Activated CD4-positive, alpha-beta T cell treated with anti-CD3 and anti-CD28 coated beads for 36 hours (primary cell): ENCODE measurements at regions of chr16 and their contacts with region 1.

Region 1: GRCh38 chr16:15592324-15592723 is 50.6 kb downstream of the MARF1 start:
- DNase-seq: peak; percentile 27
- ATAC-seq: no peak
- H3K4me3 Mint-ChIP-seq: no peak overlapping the region
- H3K27ac Mint-ChIP-seq: no peak overlapping the region
- H3K4me1 Mint-ChIP-seq: peaks cover 42% of the 10 kb centered on the region
- H3K27me3 Mint-ChIP-seq: no peaks in the 10 kb centered on the region

Region 2: GRCh38 chr16:15434425-15435215 is 157.7 kb before region 1 on chr16 and contains the start of gene BMERB1:
- CTCF ChIA-PET with region 1: no interaction called
- POLR2A ChIA-PET with region 1: no interaction called
- intact Hi-C with region 1: loop called in 1 of 2 experiments (anchors 2 kb)
- DNase-seq: peak; percentile 79
- ATAC-seq: peak; percentile 92
- H3K4me3 Mint-ChIP-seq: peak within 1 kb of the TSS; percentile 82
- H3K27ac Mint-ChIP-seq: no peak within 1 kb of the TSS
- H3K4me1 Mint-ChIP-seq: peaks cover 11% of the 10 kb centered on the region
- H3K27me3 Mint-ChIP-seq: peaks cover 20% of the 10 kb centered on the region
- total RNA-seq, gene BMERB1: 10.1 to 11.6 TPM

Region 3: GRCh38 chr16:15489016-15489415 is 103.3 kb before region 1 on chr16:
- CTCF ChIA-PET with region 1: no interaction called
- POLR2A ChIA-PET with region 1: interaction called, 7 read pairs
- intact Hi-C with region 1: loop called in 1 of 2 experiments (anchors 1 kb)
- DNase-seq: no peak
- ATAC-seq: peak; percentile 32
- H3K4me3 Mint-ChIP-seq: no peak overlapping the region
- H3K27ac Mint-ChIP-seq: peak overlapping the region; percentile 86
- H3K4me1 Mint-ChIP-seq: peaks cover 34% of the 10 kb centered on the region
- H3K27me3 Mint-ChIP-seq: no peaks in the 10 kb centered on the region

Region 4: DNA sequence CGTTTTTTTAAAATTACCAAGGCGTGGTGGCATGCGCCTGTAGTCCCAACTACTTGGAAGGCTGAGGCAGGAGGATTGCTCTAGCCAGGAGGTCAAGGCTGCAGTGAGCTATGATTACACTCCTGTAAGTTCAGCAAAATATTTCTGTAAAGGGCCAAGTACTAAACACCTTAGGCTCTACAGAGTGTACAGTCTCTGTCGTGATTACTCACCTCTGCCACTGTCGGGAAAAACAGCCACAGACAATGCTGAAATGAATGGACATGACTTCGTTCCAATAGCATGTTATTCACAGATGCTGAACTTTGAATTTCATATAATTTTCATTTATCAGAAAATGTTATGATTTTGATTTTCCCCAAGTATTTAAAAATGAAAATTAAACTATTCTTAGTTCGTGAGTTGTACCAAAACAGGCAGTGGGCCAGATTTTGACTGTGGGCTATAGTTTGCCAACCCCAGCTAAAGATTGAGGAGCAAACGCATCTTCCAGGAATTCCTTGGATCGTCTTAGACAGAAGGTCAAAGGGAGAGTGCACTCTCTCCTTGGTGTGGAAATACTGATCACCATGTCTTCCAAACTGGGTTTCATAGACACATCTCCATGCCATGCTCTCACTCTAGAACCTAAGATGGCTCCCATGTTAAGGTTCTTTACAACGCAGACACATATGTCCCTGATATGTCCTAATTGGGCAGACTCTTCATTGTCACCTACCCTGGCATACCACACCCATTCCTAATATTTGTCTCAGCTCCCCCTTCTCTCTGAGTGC is 38.8 kb before region 1 on chr16:
- CTCF ChIA-PET with region 1: no interaction called
- POLR2A ChIA-PET with region 1: interaction called, 5 read pairs
- intact Hi-C with region 1: loop called (anchors 1 kb)
- DNase-seq: peak; percentile 72
- ATAC-seq: peak; percentile 81
- H3K4me3 Mint-ChIP-seq: no peak overlapping the region
- H3K27ac Mint-ChIP-seq: peak overlapping the region; percentile 5
- H3K4me1 Mint-ChIP-seq: peaks cover 28% of the 10 kb centered on the region
- H3K27me3 Mint-ChIP-seq: no peaks in the 10 kb centered on the region

Region 5: DNA sequence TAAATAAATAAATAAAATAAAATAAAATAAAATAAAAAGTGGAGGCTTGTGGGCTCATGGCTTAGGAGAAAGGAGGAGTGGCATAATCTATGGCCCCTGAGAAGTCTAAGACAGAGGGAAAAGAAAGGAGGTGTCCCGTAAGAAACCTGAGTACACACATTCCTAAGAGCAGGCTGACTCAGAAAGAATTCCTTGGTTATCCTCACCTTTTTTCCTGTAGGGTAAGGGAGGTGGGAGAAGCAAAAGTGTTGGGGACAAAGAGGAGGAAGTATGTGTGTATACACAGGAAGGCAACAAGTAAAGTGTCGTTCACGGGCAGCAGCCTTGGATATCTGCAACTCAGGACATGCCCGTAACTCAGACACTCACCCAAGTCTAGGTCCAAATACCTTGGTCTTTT is 21.4 kb after region 1 on chr16:
- CTCF ChIA-PET with region 1: no interaction called
- POLR2A ChIA-PET with region 1: no interaction called
- intact Hi-C with region 1: no loop called
- DNase-seq: no peak
- ATAC-seq: no peak
- H3K4me3 Mint-ChIP-seq: no peak overlapping the region
- H3K27ac Mint-ChIP-seq: peak overlapping the region; percentile 47
- H3K4me1 Mint-ChIP-seq: peaks cover 12% of the 10 kb centered on the region
- H3K27me3 Mint-ChIP-seq: no peaks in the 10 kb centered on the region

Region 6: GRCh38 chr16:15650019-15650697 is 57.8 kb after region 1 on chr16 and contains the start of gene NDE1:
- CTCF ChIA-PET with region 1: no interaction called
- POLR2A ChIA-PET with region 1: no interaction called
- intact Hi-C with region 1: loop called in 1 of 2 experiments (anchors 2 kb)
- DNase-seq: peak; percentile 94
- ATAC-seq: peak; percentile 92
- H3K4me3 Mint-ChIP-seq: peak within 1 kb of the TSS; percentile 100
- H3K27ac Mint-ChIP-seq: peak within 1 kb of the TSS; percentile 99
- H3K4me1 Mint-ChIP-seq: peaks cover 29% of the 10 kb centered on the region
- H3K27me3 Mint-ChIP-seq: no peaks in the 10 kb centered on the region
- total RNA-seq, gene NDE1: 107 to 117 TPM

Region 7: GRCh38 chr16:15961060-15961511 is 368.8 kb after region 1 on chr16:
- CTCF ChIA-PET with region 1: no interaction called
- POLR2A ChIA-PET with region 1: no interaction called
- intact Hi-C with region 1: loop called in 1 of 2 experiments (anchors 1 kb)
- DNase-seq: peak; percentile 85
- ATAC-seq: peak; percentile 88
- H3K4me3 Mint-ChIP-seq: peak overlapping the region; percentile 75
- H3K27ac Mint-ChIP-seq: peak overlapping the region; percentile 99
- H3K4me1 Mint-ChIP-seq: peaks cover 81% of the 10 kb centered on the region
- H3K27me3 Mint-ChIP-seq: no peaks in the 10 kb centered on the region